Pancreas (tissue), 10 donors: ENCODE measurements at regions of chr22 and their contacts with region 1.

Region 1: GRCh38 chr22:41940832-41941765 is 5.9 kb downstream of the CENPM start:
- DNase-seq: peak; percentile 63 to 92 (median 86)
- ATAC-seq: peak; percentile 89 to 97 (median 94)
- H3K4me3 ChIP-seq: no peak overlapping the region
- H3K27ac ChIP-seq: peak overlapping the region in 1 of 4 donors; percentile 16
- H3K4me1 ChIP-seq: peaks cover 0 to 5% (median 0%) of the 10 kb centered on the region in 3 donors
- H3K27me3 ChIP-seq: no peaks in the 10 kb centered on the region
- CTCF ChIP-seq: peak; percentile 80 to 91 (median 86)

Region 2: DNA sequence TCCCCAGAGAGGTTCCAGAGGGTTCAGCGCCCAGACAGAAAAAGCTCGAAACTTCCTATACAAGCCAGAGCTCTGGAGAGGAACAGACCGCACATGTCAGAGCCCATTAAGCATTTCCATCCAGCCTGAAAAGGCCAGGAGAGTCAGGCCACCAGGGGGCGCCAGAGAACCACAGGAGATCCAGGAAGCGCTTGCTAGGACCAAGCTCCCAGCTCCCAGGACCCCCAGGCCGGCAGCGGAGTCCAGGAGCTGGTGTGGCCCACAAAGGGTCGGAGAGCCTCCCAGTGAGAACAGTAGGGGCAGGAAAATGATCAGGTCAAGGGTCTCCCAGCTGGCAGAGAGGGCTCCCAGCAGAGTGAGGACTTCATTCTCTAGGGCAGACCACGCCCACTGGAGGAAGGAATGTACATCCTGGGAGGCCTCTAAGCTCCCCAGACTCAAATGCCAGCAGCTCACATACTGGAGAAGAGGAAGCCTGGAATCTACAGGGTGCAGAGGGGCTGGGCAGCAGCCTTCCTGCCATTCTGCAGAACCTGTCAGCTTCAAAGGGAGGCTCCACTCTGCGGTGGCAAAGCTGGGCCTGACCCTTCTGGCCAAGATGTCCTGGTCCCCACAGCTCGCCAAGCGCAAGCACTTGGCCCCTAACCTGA is 243.8 kb before region 1 on chr22:
- intact Hi-C with region 1: loop called in 2 of 3 experiments (anchors 5 to 10 kb)
- DNase-seq: peak; percentile 76 to 100 (median 92)
- ATAC-seq: peak; percentile 77 to 92 (median 89)
- H3K4me3 ChIP-seq: peak overlapping the region in 1 of 4 donors; percentile 26
- H3K27ac ChIP-seq: peak overlapping the region in 2 of 4 donors; percentile 28 to 36
- H3K4me1 ChIP-seq: peaks cover 0 to 10% (median 0%) of the 10 kb centered on the region in 3 donors
- H3K27me3 ChIP-seq: no peaks in the 10 kb centered on the region
- CTCF ChIP-seq: peak; percentile 96 to 99 (median 98)

Region 3: GRCh38 chr22:41713004-41713403 is 228.1 kb before region 1 on chr22:
- intact Hi-C with region 1: no loop called
- DNase-seq: no peak
- ATAC-seq: no peak
- H3K4me3 ChIP-seq: no peak overlapping the region
- H3K27ac ChIP-seq: no peak overlapping the region
- H3K4me1 ChIP-seq: no peaks in the 10 kb centered on the region
- H3K27me3 ChIP-seq: no peaks in the 10 kb centered on the region
- CTCF ChIP-seq: no peak

Region 4: GRCh38 chr22:41732096-41732772 is 208.9 kb before region 1 on chr22:
- intact Hi-C with region 1: no loop called
- DNase-seq: no peak
- ATAC-seq: no peak
- H3K4me3 ChIP-seq: no peak overlapping the region
- H3K27ac ChIP-seq: no peak overlapping the region
- H3K4me1 ChIP-seq: no peaks in the 10 kb centered on the region
- H3K27me3 ChIP-seq: no peaks in the 10 kb centered on the region
- CTCF ChIP-seq: no peak

Region 5: GRCh38 chr22:41746567-41747400 is 194.3 kb before region 1 on chr22:
- intact Hi-C with region 1: loop called in 2 of 3 experiments (anchors 5 kb)
- DNase-seq: peak; percentile 56 to 86 (median 72)
- ATAC-seq: peak; percentile 85 to 99 (median 98)
- H3K4me3 ChIP-seq: no peak overlapping the region
- H3K27ac ChIP-seq: no peak overlapping the region
- H3K4me1 ChIP-seq: no peaks in the 10 kb centered on the region
- H3K27me3 ChIP-seq: no peaks in the 10 kb centered on the region
- CTCF ChIP-seq: peak; percentile 43 to 53 (median 49)

Region 6: GRCh38 chr22:41822317-41823060 is 118.6 kb before region 1 on chr22:
- intact Hi-C with region 1: loop called in 2 of 3 experiments (anchors 5 to 10 kb)
- DNase-seq: no peak
- ATAC-seq: peak; percentile 47 to 72 (median 66)
- H3K4me3 ChIP-seq: no peak overlapping the region
- H3K27ac ChIP-seq: no peak overlapping the region
- H3K4me1 ChIP-seq: peaks cover 7 to 13% (median 9%) of the 10 kb centered on the region in 3 donors
- H3K27me3 ChIP-seq: no peaks in the 10 kb centered on the region
- CTCF ChIP-seq: peak in 2 of 4 donors; percentile 18 to 35